ENCODE measurements at regions of chr20 and their contacts with region 1.

Region 1: GRCh38 chr20:63520504-63520933 is at the start of gene PPDPF:
- DNase-seq: peak; percentile 69 to 88
- H3K4me3 ChIP-seq: peak within 1 kb of the TSS; percentile 73 to 90
- H3K27ac ChIP-seq: peak within 1 kb of the TSS; percentile 78 to 97
- H3K4me1 ChIP-seq: peaks cover 0 to 29% (median 24%) of the 10 kb centered on the region in 4 donors
- H3K27me3 ChIP-seq: no peaks in the 10 kb centered on the region
- CTCF ChIP-seq: no peak

Region 2: GRCh38 chr20:63641792-63642544 is 121.4 kb after region 1 on chr20:
- intact Hi-C with region 1: loop called (anchors 5 kb)
- DNase-seq: peak; percentile 79 to 91
- H3K4me3 ChIP-seq: peak overlapping the region; percentile 49 to 70
- H3K27ac ChIP-seq: peak overlapping the region; percentile 61 to 73
- H3K4me1 ChIP-seq: peaks cover 0 to 14% (median 9%) of the 10 kb centered on the region in 4 donors
- H3K27me3 ChIP-seq: peaks cover 0 to 4% of the 10 kb centered on the region in 2 donors
- CTCF ChIP-seq: peak; percentile 28 to 53